Head of caudate nucleus (tissue), 42 donors: ENCODE measurements at regions of chr1 and their contacts with region 1.

Region 1: GRCh38 chr1:37692078-37692833 is at the start of gene CDCA8:
- DNase-seq: peak; percentile 96 to 100 (median 99)

Region 2: DNA sequence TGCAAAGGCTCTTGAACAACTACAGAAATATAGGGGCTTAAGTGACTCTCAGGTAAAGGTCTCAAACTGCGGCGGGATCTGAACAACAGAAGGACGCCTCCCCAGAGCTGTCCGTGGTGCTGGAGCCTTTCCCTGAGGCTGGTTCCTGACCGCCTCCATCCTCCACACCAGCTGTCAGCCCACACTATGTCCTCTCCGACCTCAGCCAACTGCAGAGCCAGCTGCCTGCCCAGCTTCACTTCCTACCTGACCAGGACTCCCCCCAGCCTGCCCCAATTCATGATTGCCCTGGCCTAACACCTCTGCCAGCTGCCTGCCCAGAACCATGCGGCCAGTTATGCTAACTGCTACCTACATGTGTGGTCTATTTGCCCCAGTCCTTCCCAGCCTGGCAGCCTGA is 281.4 kb before region 1 on chr1:
- intact Hi-C with region 1: no loop called
- DNase-seq: no peak

Region 3: DNA sequence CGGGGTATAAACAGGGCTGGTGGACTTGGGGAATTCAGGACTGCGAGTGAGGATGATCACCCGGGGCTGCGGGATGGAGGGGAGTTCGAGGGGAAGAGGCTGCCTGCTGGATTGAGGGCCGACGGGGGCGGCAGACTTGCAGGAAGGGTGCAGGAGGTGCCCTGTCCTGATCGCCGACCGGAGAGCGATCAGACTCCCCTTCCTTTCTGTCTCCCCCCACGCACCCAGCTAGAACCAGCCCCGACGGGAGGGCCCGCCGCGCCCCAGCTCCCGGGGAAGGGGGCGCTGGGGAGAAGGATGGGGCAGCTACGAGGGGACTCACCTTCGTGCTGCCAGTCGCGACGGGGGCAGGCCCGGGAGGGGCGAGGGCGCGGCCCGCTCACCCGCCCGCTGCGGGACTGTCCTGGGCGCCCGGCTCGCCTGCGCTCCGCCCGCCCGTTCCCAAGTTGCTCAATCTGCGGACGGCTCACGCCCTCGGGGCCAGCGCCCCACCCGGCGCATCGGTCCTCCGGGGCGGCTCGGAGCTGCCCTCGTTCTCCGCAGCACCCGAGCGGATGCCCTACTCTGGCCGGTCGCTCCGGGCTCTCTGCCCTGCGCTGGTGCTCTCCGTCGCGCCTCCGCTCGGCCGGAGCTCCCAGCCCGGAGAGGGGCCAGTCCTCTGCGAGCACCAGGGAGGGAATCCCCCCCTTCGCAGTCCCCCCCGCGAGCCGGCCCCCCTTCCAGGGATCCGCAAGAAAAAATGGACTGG is 57.8 kb before region 1 on chr1 and contains the start of gene RSPO1:
- intact Hi-C with region 1: no loop called
- DNase-seq: no peak

Region 4: GRCh38 chr1:37807555-37808368 is 115.5 kb after region 1 on chr1 and contains the starts of genes C1orf122 and YRDC:
- intact Hi-C with region 1: loop called (anchors 2 kb)
- DNase-seq: peak; percentile 88 to 99 (median 97)

Region 5: DNA sequence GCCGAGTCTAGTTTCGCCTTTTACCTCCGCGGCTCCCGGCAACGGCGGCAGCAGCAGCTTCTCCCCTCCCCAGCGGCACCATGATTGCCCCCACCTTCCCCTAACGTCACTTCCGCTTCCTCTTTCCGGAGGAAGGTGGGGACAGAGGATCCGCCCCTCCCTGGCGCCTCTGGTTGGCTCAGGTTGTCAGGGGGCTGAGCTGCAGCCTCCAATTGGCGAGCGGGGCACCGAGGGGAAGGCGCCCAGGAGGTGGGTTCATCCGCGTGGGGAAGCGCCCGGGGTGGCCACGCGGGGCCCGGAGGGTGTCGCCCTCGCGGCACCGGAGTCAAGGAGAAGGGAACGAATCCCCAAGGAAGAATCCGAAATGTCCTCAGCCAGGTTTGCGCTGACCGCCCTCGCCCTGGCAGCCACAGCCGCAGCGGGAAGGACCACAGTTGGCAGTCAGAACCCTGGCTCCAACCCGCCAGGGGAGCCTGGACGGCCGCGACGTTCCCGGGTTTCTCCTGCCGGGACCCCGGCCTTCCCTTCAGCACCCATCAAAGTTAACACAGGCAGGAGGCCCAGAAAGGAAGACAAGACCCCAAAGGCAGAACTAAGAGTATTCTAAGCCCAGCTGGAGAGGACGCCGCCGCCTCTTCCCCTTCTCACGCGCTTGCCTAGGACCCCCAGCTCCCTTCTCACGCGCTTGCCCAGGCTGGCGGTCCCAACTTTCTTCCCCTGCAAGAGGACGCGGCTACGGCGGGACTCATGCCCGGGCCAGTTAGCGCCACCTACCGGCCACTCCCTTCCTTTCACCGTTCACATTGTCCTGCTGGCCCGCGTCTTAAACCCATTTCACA is 167.5 kb after region 1 on chr1 and contains the start of gene MTF1:
- intact Hi-C with region 1: loop called (anchors 2 kb)
- DNase-seq: peak; percentile 94 to 99 (median 98)

Region 6: DNA sequence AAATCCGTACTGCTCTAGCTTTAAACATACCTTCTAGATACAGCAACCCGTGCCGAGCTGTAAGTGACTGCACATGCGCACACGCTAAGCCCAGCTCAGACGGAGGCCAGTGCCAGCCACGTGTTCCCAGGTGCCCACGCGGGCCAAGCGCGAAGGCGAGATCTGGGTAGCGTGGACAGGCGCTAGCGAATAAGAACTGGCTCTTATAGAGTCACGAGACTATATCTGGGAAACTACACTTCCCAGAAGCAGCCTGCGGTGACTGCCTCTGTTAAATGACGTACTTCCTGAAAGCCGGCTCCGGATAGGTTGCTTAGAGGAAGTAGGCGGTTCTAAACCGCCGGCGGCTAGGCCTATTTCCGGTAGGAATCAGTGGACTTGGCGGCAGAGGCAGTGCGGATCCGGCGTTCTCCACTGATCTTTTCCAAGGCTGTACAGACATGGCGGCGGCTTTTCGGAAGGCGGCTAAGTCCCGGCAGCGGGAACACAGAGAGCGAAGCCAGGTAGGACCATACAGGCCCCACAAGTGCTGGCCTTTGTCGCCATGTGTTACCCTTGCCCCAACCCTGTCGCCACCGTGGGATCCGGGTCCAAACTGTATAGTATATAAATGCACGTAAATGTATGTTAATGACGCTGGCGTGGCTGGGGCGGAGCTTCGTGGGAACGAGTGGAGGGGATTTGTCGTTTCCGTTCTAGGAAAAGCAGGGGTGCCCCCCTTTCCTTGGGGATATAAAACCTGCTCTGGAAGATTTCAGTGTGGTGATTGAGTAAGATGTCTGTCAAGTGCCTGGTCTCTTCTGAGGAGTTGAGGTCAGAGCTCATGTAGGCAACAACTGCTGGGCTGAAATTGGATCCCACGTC is 320.3 kb after region 1 on chr1 and contains the start of gene UTP11:
- intact Hi-C with region 1: loop called (anchors 5 kb)
- DNase-seq: peak; percentile 88 to 99 (median 96)